ENCODE measurements at regions of chr10 and their contacts with region 1.

Region 1: GRCh38 chr10:5623081-5623748 is 43.2 kb downstream of the ASB13 start:
- DNase-seq: peak; percentile 94
- H3K4me3 ChIP-seq: no peak overlapping the region
- H3K27ac ChIP-seq: peak overlapping the region in 1 of 4 donors; percentile 38
- H3K4me1 ChIP-seq: peaks cover 0 to 23% (median 18%) of the 10 kb centered on the region in 4 donors
- H3K27me3 ChIP-seq: no peaks in the 10 kb centered on the region
- CTCF ChIP-seq: peak; percentile 87 to 97 (median 93)
- EP300 ChIP-seq: no peak
- POLR2A ChIP-seq: no peak

Region 2: DNA sequence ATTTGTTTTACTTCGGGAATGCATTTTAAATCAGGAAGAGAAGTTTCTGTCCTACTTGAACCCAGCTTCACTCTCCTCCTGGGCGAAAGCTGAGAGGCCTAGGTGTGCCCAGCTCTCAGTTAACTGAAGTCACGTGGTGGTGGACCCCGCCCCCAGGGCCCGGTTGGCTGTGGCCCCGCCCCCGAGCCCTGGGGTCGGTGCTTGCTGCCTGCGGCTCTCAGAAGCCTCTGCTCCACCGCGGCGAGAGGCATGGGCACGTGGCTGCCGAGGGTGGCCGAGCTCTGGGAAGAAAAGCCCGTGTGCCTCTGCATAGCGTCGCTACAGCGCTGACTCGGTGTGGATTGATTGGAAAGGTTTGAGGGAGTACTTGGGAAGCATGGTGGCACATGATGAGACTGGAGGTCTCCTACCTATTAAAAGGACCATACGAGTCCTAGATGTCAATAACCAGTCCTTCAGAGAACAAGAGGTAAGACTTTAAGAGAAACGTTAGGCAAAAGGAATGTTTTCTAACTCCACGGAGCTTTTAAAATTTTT is 176.8 kb before region 1 on chr10:
- intact Hi-C with region 1: loop called (anchors 1 kb)
- DNase-seq: peak; percentile 97
- H3K4me3 ChIP-seq: peak overlapping the region; percentile 53 to 63 (median 60)
- H3K27ac ChIP-seq: peak overlapping the region; percentile 79 to 84 (median 82)
- H3K4me1 ChIP-seq: peaks cover 0 to 23% (median 18%) of the 10 kb centered on the region in 4 donors
- H3K27me3 ChIP-seq: no peaks in the 10 kb centered on the region
- CTCF ChIP-seq: no peak
- EP300 ChIP-seq: no peak
- POLR2A ChIP-seq: peak; percentile 89 to 94

Region 3: DNA sequence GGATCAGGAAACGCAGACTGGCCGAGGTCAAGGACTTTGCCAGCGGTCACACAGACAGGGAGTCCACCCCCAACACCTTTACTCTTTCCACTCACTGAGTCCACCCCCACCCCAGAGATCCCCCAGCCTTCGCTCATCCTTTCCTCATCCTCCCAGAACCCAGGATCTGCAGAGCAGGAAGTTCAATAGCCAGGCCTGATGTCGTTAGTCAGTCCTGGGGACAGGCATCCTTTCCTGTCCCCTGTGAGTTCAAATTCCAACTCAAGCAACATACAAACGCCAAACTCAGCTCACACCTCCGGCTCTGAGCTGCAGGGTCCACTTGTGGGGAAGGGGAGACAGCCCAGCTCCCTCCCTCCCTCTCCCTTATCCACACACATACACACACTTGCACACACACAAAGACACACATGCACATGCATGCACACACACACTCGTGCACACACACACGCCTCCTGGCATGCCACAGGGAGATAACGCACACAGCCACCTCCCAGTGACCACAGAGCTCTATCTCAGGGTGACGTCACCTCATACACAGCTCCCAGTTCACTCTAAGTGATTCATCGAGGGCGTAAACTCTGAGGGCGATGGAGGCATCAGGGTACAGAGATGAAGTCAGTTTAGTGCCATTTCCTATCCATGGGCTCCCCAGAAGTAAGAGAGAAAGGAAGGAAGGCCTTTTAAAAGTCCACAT is 74.5 kb before region 1 on chr10:
- intact Hi-C with region 1: loop called (anchors 5 kb)
- DNase-seq: peak; percentile 52
- H3K4me3 ChIP-seq: no peak overlapping the region
- H3K27ac ChIP-seq: peak overlapping the region; percentile 79 to 84 (median 81)
- H3K4me1 ChIP-seq: peaks cover 0 to 56% (median 44%) of the 10 kb centered on the region in 4 donors
- H3K27me3 ChIP-seq: no peaks in the 10 kb centered on the region
- CTCF ChIP-seq: no peak
- EP300 ChIP-seq: no peak
- POLR2A ChIP-seq: peak in 1 of 2 donors; percentile 17

Region 4: DNA sequence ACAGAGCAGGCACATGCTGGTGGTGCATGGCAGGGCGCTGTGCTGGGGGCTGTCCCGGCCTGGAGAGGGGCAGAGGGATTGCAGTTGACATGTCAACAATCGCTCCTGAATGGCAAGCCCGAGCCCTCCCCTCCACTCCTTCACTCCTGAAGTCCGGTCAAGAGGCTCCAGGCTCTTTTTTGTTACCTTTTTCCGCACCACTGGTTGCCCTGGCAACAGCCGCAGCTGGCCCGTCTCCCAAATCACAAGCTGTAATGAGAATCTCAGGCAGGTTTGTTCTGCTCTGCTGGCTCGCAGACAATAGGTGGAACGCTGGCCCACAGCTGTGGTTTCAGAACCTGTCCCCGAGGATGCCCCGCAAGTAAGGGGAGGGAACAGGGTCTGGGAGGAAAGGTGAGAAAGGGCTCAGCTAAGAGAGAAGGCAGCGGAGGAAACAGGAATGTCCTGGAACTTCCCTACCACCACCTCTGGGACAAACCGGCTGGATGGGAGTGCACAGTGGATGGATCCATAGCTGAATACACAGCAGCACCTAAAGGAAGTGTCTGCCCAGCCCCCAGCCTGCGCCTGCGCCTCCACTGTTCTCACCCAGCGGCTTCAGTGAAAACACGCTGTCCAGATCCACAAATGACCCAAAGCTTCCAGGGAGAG is 39.6 kb before region 1 on chr10:
- intact Hi-C with region 1: loop called (anchors 5 kb)
- DNase-seq: peak; percentile 71
- H3K4me3 ChIP-seq: no peak overlapping the region
- H3K27ac ChIP-seq: peak overlapping the region in 1 of 4 donors; percentile 45
- H3K4me1 ChIP-seq: peaks cover 0 to 26% (median 20%) of the 10 kb centered on the region in 4 donors
- H3K27me3 ChIP-seq: no peaks in the 10 kb centered on the region
- CTCF ChIP-seq: no peak
- EP300 ChIP-seq: no peak
- POLR2A ChIP-seq: no peak

Region 5: DNA sequence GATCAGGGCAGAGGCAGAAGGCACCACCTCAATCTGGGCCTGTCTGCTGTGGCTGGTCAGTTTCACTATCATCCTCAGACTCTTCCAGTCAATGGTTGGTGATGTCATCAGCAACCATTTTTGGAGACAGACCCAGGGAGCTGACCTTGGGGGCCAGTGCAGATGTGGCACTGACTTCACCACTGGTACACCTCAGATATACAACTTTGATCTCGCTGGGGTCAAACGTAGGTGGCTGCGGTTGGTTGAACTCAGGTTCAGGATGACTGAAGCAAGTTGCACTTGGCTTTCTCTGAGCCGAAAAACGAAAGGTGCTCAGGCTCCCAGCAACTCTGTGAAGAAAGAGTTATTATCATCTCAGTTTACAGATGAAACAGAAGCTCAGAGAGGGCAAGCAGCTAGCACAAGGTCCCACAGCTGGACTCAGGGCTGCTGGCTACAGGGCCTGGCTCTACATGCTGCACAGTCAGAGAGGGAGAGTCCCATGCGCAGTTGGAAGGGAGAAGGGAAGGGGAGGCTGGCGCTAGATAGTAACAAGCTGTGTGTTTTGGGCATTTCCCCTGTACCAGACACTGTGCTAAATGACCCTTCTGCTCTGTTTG is 239.2 kb after region 1 on chr10:
- intact Hi-C with region 1: no loop called
- DNase-seq: no peak
- H3K4me3 ChIP-seq: no peak overlapping the region
- H3K27ac ChIP-seq: no peak overlapping the region
- H3K4me1 ChIP-seq: no peaks in the 10 kb centered on the region
- H3K27me3 ChIP-seq: no peaks in the 10 kb centered on the region
- CTCF ChIP-seq: no peak
- EP300 ChIP-seq: no peak
- POLR2A ChIP-seq: no peak